ENCODE measurements at regions of chr11 and their contacts with region 1.

Region 1: DNA sequence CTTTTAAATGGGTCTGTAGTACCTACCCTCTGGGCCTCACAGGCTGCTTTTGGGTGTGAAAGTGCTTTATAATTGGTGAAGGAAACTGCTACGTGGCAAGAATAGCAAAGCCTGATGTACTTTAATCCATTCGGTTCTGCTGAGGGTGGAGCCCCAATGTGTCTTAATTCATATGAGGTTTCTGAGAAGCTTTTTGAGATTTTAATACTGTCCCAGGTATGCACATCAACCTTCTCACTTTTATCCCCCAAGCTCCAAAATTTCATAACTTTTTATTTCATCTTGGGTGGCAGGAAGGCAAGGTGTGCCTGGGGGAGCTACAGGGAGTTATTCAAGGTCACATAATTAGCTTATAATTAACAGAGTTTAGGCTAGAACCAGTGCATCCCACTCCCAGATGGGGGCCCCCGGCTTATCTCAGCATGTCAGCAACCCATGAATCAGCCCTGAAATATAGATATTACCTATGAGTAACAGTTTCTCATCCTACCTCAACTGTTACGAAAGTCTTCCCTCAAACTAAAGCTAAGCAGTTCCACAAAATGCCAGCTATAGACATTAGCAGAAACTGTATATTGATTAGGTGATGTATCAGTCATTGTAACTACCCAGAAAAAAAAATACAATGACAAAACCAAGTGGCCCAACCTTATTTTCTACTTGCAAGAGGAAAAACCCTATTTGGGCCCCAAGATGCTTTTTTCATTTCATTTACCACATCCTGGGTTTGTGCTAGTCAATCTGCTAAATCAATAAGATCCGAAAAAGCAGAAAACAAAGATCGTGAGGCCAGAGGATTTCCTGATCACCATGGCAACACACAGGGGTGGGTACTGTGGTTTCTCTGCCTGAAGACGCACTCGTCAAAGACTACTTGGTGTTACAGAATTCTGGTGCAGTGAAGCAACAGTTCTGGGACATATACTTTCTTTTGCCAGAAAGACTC is 26.7 kb downstream of the CD44 start:
- DNase-seq: peak; percentile 91
- H3K4me3 Mint-ChIP-seq: peak overlapping the region; percentile 67
- H3K27ac Mint-ChIP-seq: peak overlapping the region; percentile 98
- H3K4me1 Mint-ChIP-seq: peaks cover 98% of the 10 kb centered on the region
- H3K27me3 Mint-ChIP-seq: no peaks in the 10 kb centered on the region

Region 2: DNA sequence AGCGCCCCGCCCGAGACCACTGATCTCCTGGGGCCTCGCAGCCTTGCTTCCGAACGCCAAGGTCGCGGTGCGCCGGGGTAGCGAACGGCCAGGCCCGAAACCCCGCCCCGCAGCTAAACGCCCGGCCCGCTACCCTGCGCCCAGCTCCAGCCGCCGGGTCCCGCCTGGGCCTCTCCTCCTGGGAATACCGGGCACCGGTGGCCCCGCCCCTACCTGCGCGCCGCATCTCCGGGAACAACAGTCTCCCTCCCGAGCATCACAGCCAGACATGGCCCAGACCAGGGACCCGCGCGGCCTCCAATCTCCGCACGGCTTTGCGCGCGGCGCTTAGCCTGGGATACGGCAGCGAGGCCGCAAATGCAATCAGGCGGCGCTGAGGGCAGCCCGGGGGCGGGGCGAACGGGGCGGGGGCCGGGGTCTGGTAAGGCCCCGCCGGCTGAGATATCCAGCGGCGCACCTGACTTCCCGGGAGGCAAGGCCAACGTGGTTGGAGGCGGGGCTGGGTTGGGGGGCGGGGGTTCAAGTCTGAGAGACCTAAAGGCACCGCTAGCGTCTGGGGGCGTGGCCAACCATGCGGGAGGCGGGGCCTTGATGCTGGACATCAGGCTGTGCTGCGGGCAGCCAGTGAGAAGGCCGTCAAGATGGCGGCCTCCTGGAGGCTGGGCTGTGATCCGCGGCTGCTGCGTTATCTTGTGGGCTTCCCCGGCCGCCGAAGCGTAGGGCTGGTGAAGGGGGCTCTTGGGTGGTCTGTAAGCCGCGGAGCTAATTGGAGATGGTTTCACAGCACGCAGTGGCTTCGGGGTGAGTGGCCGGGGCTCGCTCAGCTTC is 249.5 kb before region 1 on chr11 and contains the starts of genes APIP and PDHX:
- intact Hi-C with region 1: loop called (anchors 5 kb)
- DNase-seq: peak; percentile 90
- H3K4me3 Mint-ChIP-seq: peak within 1 kb of the TSS; percentile 90
- H3K27ac Mint-ChIP-seq: peak within 1 kb of the TSS; percentile 91
- H3K4me1 Mint-ChIP-seq: peaks cover 29% of the 10 kb centered on the region
- H3K27me3 Mint-ChIP-seq: no peaks in the 10 kb centered on the region
- total RNA-seq, gene APIP: 28.1 and 30.7 TPM in 2 replicates
- total RNA-seq, gene PDHX: 29.7 and 30.6 TPM in 2 replicates

Region 3: DNA sequence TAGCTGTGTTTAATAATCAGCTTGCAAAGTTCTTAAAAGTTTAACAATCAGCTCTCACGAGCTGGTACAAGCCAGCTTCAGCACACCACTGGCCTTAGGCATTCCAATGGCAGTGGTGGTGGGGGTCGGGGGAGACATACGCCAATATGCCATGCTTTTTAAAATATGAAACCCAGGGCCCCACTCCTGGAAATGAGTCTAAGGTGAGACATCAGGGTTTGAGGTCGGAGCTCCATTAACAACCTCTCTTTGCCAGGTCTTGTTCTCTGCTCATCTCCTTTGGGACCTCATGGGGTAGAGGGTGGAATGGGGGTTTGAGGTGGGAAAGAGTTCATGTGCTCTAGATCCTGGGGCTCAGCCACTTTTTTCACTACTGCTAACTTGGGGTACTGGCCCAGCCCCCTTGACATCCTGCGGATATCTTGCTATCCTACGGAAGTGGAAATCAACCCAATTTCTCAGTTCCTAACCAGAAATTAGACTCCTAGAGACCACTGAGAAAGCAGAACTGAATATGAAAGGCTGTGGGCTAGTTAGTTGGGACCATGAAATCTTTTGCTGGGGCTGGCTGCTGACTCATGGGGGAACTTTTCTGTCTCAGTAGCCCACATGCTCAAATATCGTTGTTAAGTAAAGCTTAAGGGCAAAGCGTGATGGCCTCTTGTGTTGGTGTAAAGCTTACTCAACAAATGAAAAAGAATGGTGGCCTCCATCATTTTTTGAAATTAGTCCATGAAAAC is 159.1 kb before region 1 on chr11:
- intact Hi-C with region 1: loop called (anchors 1 kb)
- DNase-seq: no peak
- H3K4me3 Mint-ChIP-seq: no peak overlapping the region
- H3K27ac Mint-ChIP-seq: peak overlapping the region; percentile 5
- H3K4me1 Mint-ChIP-seq: peaks cover 57% of the 10 kb centered on the region
- H3K27me3 Mint-ChIP-seq: peaks cover 28% of the 10 kb centered on the region

Region 4: GRCh38 chr11:35040221-35040942 is 125.3 kb before region 1 on chr11:
- intact Hi-C with region 1: loop called (anchors 1 kb)
- DNase-seq: peak; percentile 69
- H3K4me3 Mint-ChIP-seq: peak overlapping the region; percentile 73
- H3K27ac Mint-ChIP-seq: peak overlapping the region; percentile 91
- H3K4me1 Mint-ChIP-seq: peaks cover 58% of the 10 kb centered on the region
- H3K27me3 Mint-ChIP-seq: peaks cover 20% of the 10 kb centered on the region

Region 5: GRCh38 chr11:35082321-35083182 is 83.1 kb before region 1 on chr11:
- intact Hi-C with region 1: loop called (anchors 1 kb)
- DNase-seq: peak; percentile 83
- H3K4me3 Mint-ChIP-seq: peak overlapping the region; percentile 33
- H3K27ac Mint-ChIP-seq: peak overlapping the region; percentile 55
- H3K4me1 Mint-ChIP-seq: peaks cover 81% of the 10 kb centered on the region
- H3K27me3 Mint-ChIP-seq: no peaks in the 10 kb centered on the region

Region 6: DNA sequence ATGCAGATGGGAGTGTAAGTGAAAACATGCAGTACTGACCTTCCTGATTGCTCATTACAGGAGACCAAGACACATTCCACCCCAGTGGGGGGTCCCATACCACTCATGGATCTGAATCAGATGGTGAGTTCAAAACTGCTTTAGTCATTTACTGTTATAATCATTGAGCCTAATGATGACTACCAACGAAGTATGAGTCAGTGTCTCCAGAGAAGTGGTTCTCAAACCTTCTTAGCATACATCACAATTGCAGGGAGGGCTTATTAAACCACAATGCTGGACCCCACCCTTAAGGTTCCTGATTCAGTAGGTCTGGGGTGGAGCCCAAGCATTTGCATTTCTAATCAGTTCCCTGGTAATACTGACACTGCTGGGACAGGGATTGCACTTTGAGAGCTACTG is 49.1 kb after region 1 on chr11:
- intact Hi-C with region 1: loop called (anchors 5 kb)
- DNase-seq: peak; percentile 11
- H3K4me3 Mint-ChIP-seq: no peak overlapping the region
- H3K27ac Mint-ChIP-seq: no peak overlapping the region
- H3K4me1 Mint-ChIP-seq: peaks cover 45% of the 10 kb centered on the region
- H3K27me3 Mint-ChIP-seq: no peaks in the 10 kb centered on the region

Region 7: DNA sequence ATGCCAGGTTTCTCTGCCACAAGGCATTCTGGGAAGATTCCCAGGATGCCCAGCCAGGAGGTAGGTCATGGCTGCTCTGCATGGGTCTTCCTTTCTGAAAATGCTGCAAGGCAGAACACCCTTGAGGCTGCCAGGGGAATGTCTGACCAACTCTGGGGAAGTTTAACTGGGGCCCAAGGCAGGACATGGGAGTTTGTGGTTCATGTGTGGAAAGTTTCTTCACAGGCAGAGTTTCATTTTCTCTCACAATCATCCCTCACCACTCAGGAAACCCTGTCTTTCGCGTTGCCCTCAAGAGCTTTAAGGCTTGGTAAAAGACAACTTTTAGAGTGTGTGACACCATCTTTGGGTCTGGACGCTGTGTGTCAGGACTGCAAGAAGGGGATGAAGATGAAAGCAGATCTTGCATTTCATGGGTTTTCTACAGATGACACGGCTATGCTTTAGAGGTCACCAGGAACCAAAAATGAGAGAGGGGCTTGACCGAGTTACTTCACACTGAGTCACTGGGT is 106.8 kb after region 1 on chr11:
- intact Hi-C with region 1: loop called (anchors 5 kb)
- DNase-seq: peak; percentile 36
- H3K4me3 Mint-ChIP-seq: peak overlapping the region; percentile 23
- H3K27ac Mint-ChIP-seq: peak overlapping the region; percentile 79
- H3K4me1 Mint-ChIP-seq: peaks cover 57% of the 10 kb centered on the region
- H3K27me3 Mint-ChIP-seq: peaks cover 18% of the 10 kb centered on the region

Region 8: DNA sequence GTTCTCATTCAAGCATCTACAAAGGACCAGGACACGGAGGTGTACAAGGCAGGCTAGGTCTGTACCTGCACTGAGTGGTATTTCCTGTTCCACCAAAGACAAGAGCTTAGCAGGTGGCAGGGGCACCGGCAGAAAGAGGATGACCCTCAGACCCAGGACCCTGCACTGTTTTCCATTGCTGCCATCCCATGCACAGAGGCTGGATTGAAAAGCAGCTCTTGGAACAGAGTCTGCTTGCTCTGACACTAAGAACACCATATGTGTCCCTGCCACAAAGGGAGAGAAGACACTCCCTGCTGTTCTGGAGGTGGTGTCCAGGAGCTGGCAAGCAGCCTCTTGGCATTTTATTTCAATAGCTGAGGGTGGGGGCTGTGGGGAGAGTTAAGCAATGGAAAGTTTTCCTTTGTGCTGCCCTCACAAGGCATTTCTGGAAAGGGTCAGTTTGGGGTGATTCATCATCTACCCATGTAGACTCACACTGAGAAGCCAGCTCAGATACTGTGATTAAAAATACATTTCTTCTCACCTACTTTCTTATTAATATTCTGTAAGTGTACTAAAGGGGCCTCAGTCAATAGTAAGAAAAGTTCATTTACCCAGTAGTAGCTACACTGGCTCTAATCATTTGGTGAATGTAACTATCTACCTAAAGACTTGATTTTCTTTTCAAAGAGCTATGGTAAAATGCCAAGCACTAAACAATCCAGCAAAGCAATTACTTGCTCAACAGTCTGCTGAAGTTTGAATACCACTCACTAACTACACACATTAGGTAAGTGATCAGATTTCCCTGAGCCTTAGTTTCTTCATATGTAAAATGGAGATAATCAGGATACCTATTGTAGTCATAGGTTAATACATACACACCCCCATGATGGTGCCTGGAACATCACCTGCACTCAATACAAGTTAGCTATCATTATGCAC is 198.4 kb after region 1 on chr11:
- intact Hi-C with region 1: no loop called
- DNase-seq: no peak
- H3K4me3 Mint-ChIP-seq: no peak overlapping the region
- H3K27ac Mint-ChIP-seq: no peak overlapping the region
- H3K4me1 Mint-ChIP-seq: no peaks in the 10 kb centered on the region
- H3K27me3 Mint-ChIP-seq: peaks cover 22% of the 10 kb centered on the region